A673 (cell line): ENCODE measurements at regions of chr6 and their contacts with region 1.

Region 1: DNA sequence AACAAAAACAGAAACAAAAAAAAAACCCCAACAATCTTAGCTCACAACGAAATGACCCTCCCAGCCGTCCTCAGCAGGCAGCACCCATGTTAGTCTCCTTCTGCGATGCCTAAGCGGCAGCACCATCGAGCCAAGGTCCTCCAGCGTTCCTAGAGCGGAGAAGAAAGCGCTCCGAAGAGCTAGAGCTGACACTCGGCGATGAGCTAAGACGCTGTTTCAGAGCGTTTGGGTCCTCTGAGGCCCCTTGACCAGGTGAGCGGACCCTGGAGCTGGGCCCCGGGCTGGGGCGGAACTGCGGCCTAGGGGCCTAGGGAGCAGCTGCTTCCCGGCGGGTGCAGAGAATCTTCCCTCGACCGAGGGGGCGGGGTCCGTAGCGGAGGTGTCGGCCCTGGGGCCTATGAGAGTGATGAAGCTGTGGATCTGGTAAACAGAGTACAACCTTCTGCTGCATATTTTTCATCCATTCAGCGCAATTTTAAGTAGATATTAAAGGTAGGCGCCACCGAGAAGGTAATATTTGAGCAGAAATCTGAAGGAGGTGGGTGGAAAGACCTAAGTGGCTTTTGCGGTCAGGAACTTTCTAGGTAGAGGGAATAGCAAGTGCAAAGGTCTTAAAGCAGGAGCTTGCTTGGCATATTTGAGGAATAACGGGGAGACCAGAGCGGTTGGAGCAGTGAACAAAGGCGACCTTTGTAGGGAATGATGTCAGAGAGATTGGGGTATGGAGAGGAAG is at the start of gene ZSCAN26:
- DNase-seq: peak; percentile 93
- H3K4me3 ChIP-seq: peak within 1 kb of the TSS; percentile 69
- H3K27ac ChIP-seq: peak within 1 kb of the TSS; percentile 79
- H3K4me1 ChIP-seq: peaks cover 11% of the 10 kb centered on the region
- H3K27me3 ChIP-seq: no peaks in the 10 kb centered on the region
- CTCF ChIP-seq: no peak
- total RNA-seq, gene ZSCAN26: 15.1 and 19.9 TPM in 2 replicates

Region 2: GRCh38 chr6:28252009-28252975 is 14.8 kb before region 1 on chr6 and contains the start of gene ZKSCAN4:
- CTCF ChIA-PET with region 1: no interaction called
- POLR2A ChIA-PET with region 1: interaction called, 5 read pairs
- intact Hi-C with region 1: loop called (anchors 2 kb)
- DNase-seq: peak; percentile 92
- H3K4me3 ChIP-seq: peak within 1 kb of the TSS; percentile 100
- H3K27ac ChIP-seq: peak within 1 kb of the TSS; percentile 79
- H3K4me1 ChIP-seq: peaks cover 6% of the 10 kb centered on the region
- H3K27me3 ChIP-seq: no peaks in the 10 kb centered on the region
- CTCF ChIP-seq: no peak
- total RNA-seq, gene ZKSCAN4: 6.4 and 6.6 TPM in 2 replicates

Region 3: DNA sequence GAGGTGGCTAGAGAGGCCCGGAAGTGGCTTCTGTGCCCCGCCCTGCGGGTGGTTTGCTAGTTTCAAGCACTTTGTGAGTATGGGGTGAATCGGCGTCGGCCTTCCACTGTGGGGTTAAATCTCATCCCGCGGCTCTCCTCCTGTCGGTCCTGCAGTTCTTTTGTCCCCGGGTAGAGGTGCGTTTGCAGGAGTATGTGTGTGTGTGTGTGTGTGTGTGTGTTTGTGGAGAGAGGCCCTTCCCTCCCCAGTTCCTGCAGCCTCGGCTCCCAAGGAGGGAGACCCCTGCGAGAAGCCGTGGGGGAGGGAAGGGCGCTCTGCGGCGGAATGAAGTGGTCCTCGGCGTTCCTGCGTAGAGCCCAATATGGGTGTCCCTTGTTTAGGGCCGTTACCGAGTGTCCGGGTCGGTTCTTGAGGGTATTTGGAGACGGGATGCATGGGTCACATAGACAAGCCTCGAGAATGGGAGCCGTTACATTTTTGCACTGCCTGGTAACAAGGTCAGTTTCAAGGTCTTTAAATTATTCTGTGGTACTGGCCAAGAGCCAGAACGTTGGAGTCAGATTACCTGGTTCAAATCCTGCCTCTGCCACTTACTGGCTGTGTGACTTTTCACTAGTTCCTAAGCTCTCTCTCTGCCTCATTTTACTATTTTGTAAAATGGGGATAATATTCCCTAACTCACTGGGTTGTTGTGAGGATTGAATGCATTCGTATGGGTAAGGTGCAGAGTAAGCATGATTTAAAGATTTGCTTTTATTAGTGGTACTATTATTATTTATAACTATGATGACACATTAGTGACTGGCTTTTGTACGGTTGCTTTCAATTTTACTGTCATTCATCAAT is 83.0 kb after region 1 on chr6 and contains the start of gene ZKSCAN3:
- CTCF ChIA-PET with region 1: no interaction called
- POLR2A ChIA-PET with region 1: no interaction called
- intact Hi-C with region 1: loop called (anchors 2 kb)
- DNase-seq: peak; percentile 86
- H3K4me3 ChIP-seq: peak within 1 kb of the TSS; percentile 91
- H3K27ac ChIP-seq: peak within 1 kb of the TSS; percentile 79
- H3K4me1 ChIP-seq: peaks cover 7% of the 10 kb centered on the region
- H3K27me3 ChIP-seq: peaks cover 24% of the 10 kb centered on the region
- CTCF ChIP-seq: no peak
- total RNA-seq, gene ZKSCAN3: 8.0 and 8.7 TPM in 2 replicates

Region 4: DNA sequence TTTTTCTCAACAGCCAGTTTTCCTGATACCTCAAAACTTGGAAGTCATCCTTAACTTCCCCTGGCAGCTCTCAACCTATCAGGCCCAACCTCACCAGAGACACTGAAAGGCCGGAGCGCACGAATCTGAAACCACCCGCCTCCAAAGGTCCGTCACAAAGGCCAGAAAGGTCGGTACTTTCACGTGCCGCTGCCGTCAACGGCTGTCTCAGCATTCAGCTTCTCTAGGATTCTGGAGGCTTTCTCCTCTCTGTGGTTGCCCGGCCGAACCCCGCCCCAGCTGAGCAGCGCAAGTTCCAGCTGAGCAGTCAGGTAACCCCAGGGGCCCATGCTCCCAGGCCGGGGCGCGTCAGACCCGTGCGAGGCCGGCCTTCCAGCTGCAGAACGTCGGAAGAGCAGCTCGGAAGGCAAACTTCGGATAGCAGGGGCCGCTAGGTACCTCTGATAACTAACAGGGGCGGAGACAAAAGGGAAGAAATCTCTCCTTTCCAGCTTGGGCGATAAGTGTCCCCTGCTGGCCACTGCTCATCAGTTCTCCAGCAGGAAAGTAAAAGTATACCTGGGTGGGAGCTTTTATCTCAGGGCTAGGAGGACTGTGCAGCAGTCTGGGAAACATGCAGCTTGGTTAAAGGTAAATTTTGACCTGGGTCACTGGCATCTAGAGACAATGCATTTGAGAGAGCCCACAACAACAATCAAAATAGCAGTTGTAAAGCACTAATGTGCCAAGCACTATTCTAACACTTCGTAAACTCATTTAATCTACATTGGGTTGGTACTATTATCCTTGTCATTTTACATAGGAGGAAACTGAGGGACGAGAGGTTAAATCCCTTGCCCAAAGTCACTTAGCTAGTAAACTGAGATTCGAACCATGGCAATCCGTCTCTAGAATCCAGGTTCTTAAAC is 116.4 kb after region 1 on chr6:
- CTCF ChIA-PET with region 1: no interaction called
- POLR2A ChIA-PET with region 1: no interaction called
- intact Hi-C with region 1: no loop called
- DNase-seq: peak; percentile 51
- H3K4me3 ChIP-seq: peak overlapping the region; percentile 50
- H3K27ac ChIP-seq: no peak overlapping the region
- H3K4me1 ChIP-seq: no peaks in the 10 kb centered on the region
- H3K27me3 ChIP-seq: no peaks in the 10 kb centered on the region
- CTCF ChIP-seq: peak; percentile 37; the same call in 1 of the 2 replicates